ENCODE measurements at regions of chr1 and their contacts with region 1.

Region 1: GRCh38 chr1:158163000-158163947 is 17.4 kb upstream of the CD1D start:
- DNase-seq: no peak
- ATAC-seq: peak; percentile 100
- H3K4me3 ChIP-seq: no peak overlapping the region
- H3K27ac ChIP-seq: no peak overlapping the region
- H3K4me1 ChIP-seq: peaks cover 19% of the 10 kb centered on the region
- H3K27me3 ChIP-seq: peaks cover 0 to 5% of the 10 kb centered on the region in 2 experiments; a peak in 1 of 4 replicates
- CTCF ChIP-seq: no peak
- EP300 ChIP-seq: peak in 1 of 2 experiments; percentile 30; a peak in 1 of 4 replicates
- POLR2A ChIP-seq: no peak
- RAD21 ChIP-seq: no peak

Region 2: DNA sequence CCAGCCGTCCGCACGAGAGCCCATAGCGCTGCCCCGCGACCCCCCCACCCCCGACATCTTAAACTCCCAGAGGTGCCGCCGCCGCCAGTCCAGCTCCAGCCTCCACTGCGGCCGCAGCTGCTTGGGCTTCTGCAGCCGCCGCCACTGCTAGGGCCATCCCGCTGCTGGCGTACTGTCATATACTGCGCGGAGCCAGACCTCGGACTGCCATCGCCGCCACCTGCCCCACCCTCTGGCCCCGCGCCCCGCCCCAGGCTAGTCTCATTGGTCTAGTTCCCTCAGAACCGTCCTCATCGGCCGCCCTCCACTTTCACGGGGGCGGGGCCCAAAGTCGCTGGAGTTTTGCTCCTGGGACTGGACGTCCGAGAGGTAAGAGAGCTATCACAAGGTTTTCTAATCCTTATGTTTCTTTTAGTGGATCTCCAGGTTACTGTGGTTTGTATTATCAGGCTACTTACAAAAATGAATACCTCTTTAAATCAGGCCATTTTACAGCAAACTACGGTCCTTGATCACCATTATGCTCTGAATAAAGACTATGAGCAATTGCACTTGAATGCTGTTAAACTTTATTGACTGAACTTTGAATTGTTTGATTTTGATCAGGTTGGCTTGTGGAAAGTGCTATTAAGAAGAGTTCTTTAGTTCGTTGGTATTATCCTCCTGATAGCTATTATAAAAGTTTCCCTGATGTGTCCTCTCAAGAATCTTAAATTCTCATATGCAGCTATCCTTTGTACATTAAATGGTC is 14.6 kb after region 1 on chr1:
- CTCF ChIA-PET with region 1: interaction called, 7 read pairs
- POLR2A ChIA-PET with region 1: interaction called, 6 read pairs
- RAD21 ChIA-PET with region 1: interaction called, 5 read pairs
- SMC1A ChIA-PET with region 1: interaction called, 10 read pairs
- in situ Hi-C with region 1: no loop called
- intact Hi-C with region 1: no loop called
- DNase-seq: no peak
- ATAC-seq: no peak
- H3K4me3 ChIP-seq: no peak overlapping the region
- H3K27ac ChIP-seq: no peak overlapping the region
- H3K4me1 ChIP-seq: peaks cover 31% of the 10 kb centered on the region
- H3K27me3 ChIP-seq: peaks cover 10 to 22% of the 10 kb centered on the region in 2 experiments
- CTCF ChIP-seq: no peak
- EP300 ChIP-seq: no peak
- POLR2A ChIP-seq: no peak
- RAD21 ChIP-seq: no peak

Measured in GM12878 (cell line).